ENCODE measurements at regions of chr19 and their contacts with region 1.

Region 1: GRCh38 chr19:18097217-18097992 is at the start of gene MAST3:
- DNase-seq: peak; percentile 93
- ATAC-seq: peak; percentile 76
- H3K4me3 ChIP-seq: peak within 1 kb of the TSS; percentile 71 to 95 (median 91)
- H3K4me3 Mint-ChIP-seq: peak within 1 kb of the TSS; percentile 97
- H3K27ac ChIP-seq: peak within 1 kb of the TSS; percentile 82 to 96
- H3K27ac Mint-ChIP-seq: peak within 1 kb of the TSS; percentile 92
- H3K4me1 ChIP-seq: peaks cover 10 to 42% of the 10 kb centered on the region in 2 donors
- H3K4me1 Mint-ChIP-seq: peaks cover 38% of the 10 kb centered on the region
- H3K27me3 ChIP-seq: no peaks in the 10 kb centered on the region
- H3K27me3 Mint-ChIP-seq: no peaks in the 10 kb centered on the region
- CTCF ChIP-seq: no peak
- total RNA-seq, gene MAST3: 85.5 and 90.7 TPM in 2 replicates

Region 2: DNA sequence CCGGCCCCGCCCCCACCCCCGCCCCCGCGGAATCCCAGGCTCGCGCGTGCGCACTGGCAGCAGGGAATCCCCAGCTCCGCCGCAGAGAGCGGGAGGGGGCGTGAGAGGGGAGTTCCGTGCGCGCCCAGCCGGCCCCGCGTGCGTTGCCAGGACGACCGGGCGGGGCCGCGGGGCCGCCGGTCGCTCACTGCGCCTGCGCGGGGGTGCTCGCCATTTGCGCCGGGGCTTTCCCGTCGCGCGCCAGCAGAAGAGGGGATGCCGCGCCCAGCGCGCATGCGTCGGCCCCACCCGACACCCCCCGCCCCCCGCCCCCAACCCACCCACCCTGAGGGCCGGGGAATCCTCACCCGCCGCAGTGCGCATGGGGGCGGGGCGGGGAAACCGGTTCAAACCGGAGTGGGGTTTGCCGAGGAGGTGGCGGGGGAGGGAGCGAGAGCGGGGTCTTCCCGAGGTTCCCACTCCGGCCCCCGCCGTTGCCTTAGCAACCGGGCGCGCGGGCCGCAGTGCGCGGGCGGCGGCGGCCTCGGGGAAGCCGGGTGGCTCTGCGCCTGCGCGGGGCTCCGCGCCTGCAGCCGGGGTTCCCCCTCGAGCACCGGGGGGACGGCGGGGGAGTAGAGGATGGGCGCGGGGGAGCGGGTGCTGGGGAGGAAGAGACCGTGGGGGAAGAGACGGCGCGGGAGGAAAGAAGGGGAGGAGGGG is 149.4 kb before region 1 on chr19:
- CTCF ChIA-PET with region 1: no interaction called
- POLR2A ChIA-PET with region 1: no interaction called
- intact Hi-C with region 1: loop called (anchors 5 kb)
- DNase-seq: peak; percentile 97
- ATAC-seq: peak; percentile 64
- H3K4me3 ChIP-seq: peak overlapping the region in 4 of 5 experiments; percentile 46 to 63 (median 58)
- H3K4me3 Mint-ChIP-seq: peak overlapping the region; percentile 88
- H3K27ac ChIP-seq: peak overlapping the region; percentile 55 to 94
- H3K27ac Mint-ChIP-seq: peak overlapping the region; percentile 56
- H3K4me1 ChIP-seq: peaks cover 53 to 61% of the 10 kb centered on the region in 2 donors
- H3K4me1 Mint-ChIP-seq: peaks cover 53% of the 10 kb centered on the region
- H3K27me3 ChIP-seq: peaks cover 0 to 40% (median 27%) of the 10 kb centered on the region in 4 experiments
- H3K27me3 Mint-ChIP-seq: peaks cover 15% of the 10 kb centered on the region
- CTCF ChIP-seq: no peak

Region 3: GRCh38 chr19:17985037-17985818 is 112.2 kb before region 1 on chr19:
- CTCF ChIA-PET with region 1: no interaction called
- POLR2A ChIA-PET with region 1: no interaction called
- intact Hi-C with region 1: no loop called
- DNase-seq: no peak
- ATAC-seq: no peak
- H3K4me3 ChIP-seq: no peak overlapping the region
- H3K4me3 Mint-ChIP-seq: no peak overlapping the region
- H3K27ac ChIP-seq: no peak overlapping the region
- H3K27ac Mint-ChIP-seq: no peak overlapping the region
- H3K4me1 ChIP-seq: peaks cover 6 to 9% of the 10 kb centered on the region in 2 donors
- H3K4me1 Mint-ChIP-seq: peaks cover 3% of the 10 kb centered on the region
- H3K27me3 ChIP-seq: peaks cover 0 to 7% (median 0%) of the 10 kb centered on the region in 4 experiments
- H3K27me3 Mint-ChIP-seq: peaks cover 10% of the 10 kb centered on the region
- CTCF ChIP-seq: no peak

Region 4: GRCh38 chr19:18021121-18021755 is 76.2 kb before region 1 on chr19:
- CTCF ChIA-PET with region 1: no interaction called
- POLR2A ChIA-PET with region 1: no interaction called
- intact Hi-C with region 1: loop called (anchors 5 kb)
- DNase-seq: peak; percentile 84
- ATAC-seq: peak; percentile 22
- H3K4me3 ChIP-seq: peak overlapping the region in 2 of 5 experiments; percentile 18 to 35
- H3K4me3 Mint-ChIP-seq: peak overlapping the region; percentile 79
- H3K27ac ChIP-seq: peak overlapping the region; percentile 95 to 99
- H3K27ac Mint-ChIP-seq: peak overlapping the region; percentile 98
- H3K4me1 ChIP-seq: peaks cover 51 to 64% of the 10 kb centered on the region in 2 donors
- H3K4me1 Mint-ChIP-seq: peaks cover 68% of the 10 kb centered on the region
- H3K27me3 ChIP-seq: no peaks in the 10 kb centered on the region
- H3K27me3 Mint-ChIP-seq: no peaks in the 10 kb centered on the region
- CTCF ChIP-seq: no peak

Region 5: GRCh38 chr19:18058208-18059030 is 39.0 kb before region 1 on chr19:
- CTCF ChIA-PET with region 1: interaction called, 10 read pairs
- POLR2A ChIA-PET with region 1: interaction called, 5 read pairs
- intact Hi-C with region 1: no loop called
- DNase-seq: peak; percentile 90
- ATAC-seq: peak; percentile 96
- H3K4me3 ChIP-seq: peak overlapping the region in 3 of 5 experiments; percentile 21 to 23 (median 23)
- H3K4me3 Mint-ChIP-seq: peak overlapping the region; percentile 65
- H3K27ac ChIP-seq: peak overlapping the region; percentile 67 to 71
- H3K27ac Mint-ChIP-seq: peak overlapping the region; percentile 89
- H3K4me1 ChIP-seq: peaks cover 11 to 13% of the 10 kb centered on the region in 2 donors
- H3K4me1 Mint-ChIP-seq: peaks cover 20% of the 10 kb centered on the region
- H3K27me3 ChIP-seq: no peaks in the 10 kb centered on the region
- H3K27me3 Mint-ChIP-seq: no peaks in the 10 kb centered on the region
- CTCF ChIP-seq: peak; percentile 96

Region 6: GRCh38 chr19:18117692-18118378 is 20.4 kb after region 1 on chr19:
- CTCF ChIA-PET with region 1: interaction called, 58 read pairs
- POLR2A ChIA-PET with region 1: interaction called, 6 read pairs
- intact Hi-C with region 1: loop called (anchors 2 kb)
- DNase-seq: peak; percentile 96
- ATAC-seq: peak; percentile 94
- H3K4me3 ChIP-seq: peak overlapping the region in 4 of 5 experiments; percentile 64 to 71 (median 66)
- H3K4me3 Mint-ChIP-seq: peak overlapping the region; percentile 86
- H3K27ac ChIP-seq: peak overlapping the region; percentile 47 to 76
- H3K27ac Mint-ChIP-seq: peak overlapping the region; percentile 85
- H3K4me1 ChIP-seq: peaks cover 30 to 36% of the 10 kb centered on the region in 2 donors
- H3K4me1 Mint-ChIP-seq: peaks cover 52% of the 10 kb centered on the region
- H3K27me3 ChIP-seq: no peaks in the 10 kb centered on the region
- H3K27me3 Mint-ChIP-seq: no peaks in the 10 kb centered on the region
- CTCF ChIP-seq: no peak

Region 7: GRCh38 chr19:18173572-18174288 is 76.3 kb after region 1 on chr19 and contains the start of gene IFI30:
- CTCF ChIA-PET with region 1: no interaction called
- POLR2A ChIA-PET with region 1: interaction called, 9 read pairs
- intact Hi-C with region 1: loop called (anchors 5 kb)
- DNase-seq: peak; percentile 97
- ATAC-seq: peak; percentile 65
- H3K4me3 ChIP-seq: peak within 1 kb of the TSS; percentile 67 to 97 (median 83)
- H3K4me3 Mint-ChIP-seq: peak within 1 kb of the TSS; percentile 94
- H3K27ac ChIP-seq: peak within 1 kb of the TSS; percentile 97 to 99
- H3K27ac Mint-ChIP-seq: peak within 1 kb of the TSS; percentile 98
- H3K4me1 ChIP-seq: peaks cover 72 to 90% of the 10 kb centered on the region in 2 donors
- H3K4me1 Mint-ChIP-seq: peaks cover 84% of the 10 kb centered on the region
- H3K27me3 ChIP-seq: no peaks in the 10 kb centered on the region
- H3K27me3 Mint-ChIP-seq: no peaks in the 10 kb centered on the region
- CTCF ChIP-seq: no peak
- total RNA-seq, gene IFI30: 171 TPM in 2 replicates

Region 8: DNA sequence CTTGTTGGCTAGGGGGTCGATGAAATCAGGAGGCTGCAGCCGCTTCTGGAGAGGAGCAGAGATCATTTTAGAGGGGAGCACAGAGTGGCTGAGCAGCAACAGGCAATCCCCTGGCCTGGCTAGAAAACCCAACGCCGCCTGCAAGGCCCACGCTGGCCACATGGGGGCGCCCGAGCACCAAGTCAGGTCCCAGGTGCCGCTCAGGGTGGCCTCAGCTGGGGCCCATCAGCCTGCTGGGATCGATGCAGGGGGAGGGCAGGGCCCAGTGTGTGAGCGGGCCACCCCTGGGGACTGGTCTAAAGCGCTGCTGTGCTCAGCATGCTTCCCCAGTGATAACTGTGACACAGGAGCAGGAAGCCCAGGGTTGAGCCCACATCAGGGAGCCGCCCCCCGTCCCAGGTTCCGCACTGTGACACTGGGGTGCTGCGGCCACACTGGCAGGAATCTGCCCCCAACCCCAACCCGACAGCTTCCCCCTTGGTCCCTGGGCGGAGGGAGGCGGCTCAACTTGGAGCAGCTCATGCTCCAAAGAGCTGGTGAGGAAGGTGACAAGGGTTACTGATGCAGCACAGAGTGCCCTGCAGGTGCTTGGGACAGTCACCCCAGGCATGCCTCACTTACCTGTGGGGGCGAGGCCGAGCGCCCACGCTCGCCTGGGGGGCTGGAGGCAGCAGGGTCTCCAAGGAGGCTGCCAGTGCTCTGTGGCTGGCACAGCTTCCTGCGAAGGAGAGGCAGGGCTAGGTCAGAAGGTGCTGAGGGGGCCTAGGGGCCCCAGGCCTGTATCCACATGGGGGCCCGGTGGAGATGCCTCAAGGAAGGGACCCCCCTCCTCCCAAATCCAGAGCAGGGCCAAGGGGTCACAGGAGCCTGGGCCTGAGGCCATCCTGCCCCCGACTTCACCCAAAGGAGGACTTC is 353.8 kb after region 1 on chr19:
- CTCF ChIA-PET with region 1: no interaction called
- POLR2A ChIA-PET with region 1: no interaction called
- intact Hi-C with region 1: no loop called
- DNase-seq: peak; percentile 87
- ATAC-seq: peak; percentile 96
- H3K4me3 ChIP-seq: no peak overlapping the region
- H3K4me3 Mint-ChIP-seq: no peak overlapping the region
- H3K27ac ChIP-seq: no peak overlapping the region
- H3K27ac Mint-ChIP-seq: peak overlapping the region; percentile 71
- H3K4me1 ChIP-seq: peaks cover 0 to 5% of the 10 kb centered on the region in 2 donors
- H3K4me1 Mint-ChIP-seq: peaks cover 6% of the 10 kb centered on the region
- H3K27me3 ChIP-seq: no peaks in the 10 kb centered on the region
- H3K27me3 Mint-ChIP-seq: no peaks in the 10 kb centered on the region
- CTCF ChIP-seq: peak; percentile 96

Measured in B cell (primary cell).